Activated T-helper 1 cell treated with anti-CD3 and anti-CD28 coated beads, Interleukin-12 subunit alpha, Interleukin-12 subunit beta, Interleukin-2, Interleukin-4 antibody, amounts not matched to agents 30 ng/mL and 10 ng/mL and 1 ng/mL, durations not matched to agents 14 hours and 24 hours and 36 hours (primary cell): ENCODE measurements at regions of chr20 and their contacts with region 1.

Region 1: DNA sequence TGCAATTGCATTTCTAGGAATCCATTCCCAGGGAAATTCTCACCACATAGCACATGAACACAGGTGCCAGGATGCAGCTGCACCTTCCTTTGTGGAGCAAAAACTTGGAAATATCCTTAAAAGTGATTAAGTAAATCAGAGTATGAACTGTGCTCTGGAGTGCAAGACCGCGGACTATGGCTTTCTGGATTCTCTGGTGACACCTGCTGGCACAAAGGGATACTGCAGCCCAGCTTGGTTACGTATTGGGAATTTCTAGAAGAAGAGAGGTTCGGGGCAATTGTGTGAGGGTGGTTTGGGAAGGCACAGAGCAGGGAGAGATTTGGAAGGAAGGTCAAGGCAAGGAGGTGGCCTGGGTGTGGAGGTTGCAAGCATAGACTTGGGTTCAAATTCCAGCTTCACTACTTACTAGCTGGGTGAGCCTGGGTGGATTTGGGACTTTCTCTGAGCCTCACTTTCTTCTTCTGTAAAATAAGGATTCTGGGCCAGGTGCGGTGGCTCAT is 15.9 kb upstream of the PEDS1 start:
- DNase-seq: peak; percentile 64
- H3K4me3 Mint-ChIP-seq: no peak overlapping the region
- H3K27ac Mint-ChIP-seq: no peak overlapping the region
- H3K4me1 Mint-ChIP-seq: peaks cover 19% of the 10 kb centered on the region
- H3K27me3 Mint-ChIP-seq: peaks cover 13% of the 10 kb centered on the region

Region 2: GRCh38 chr20:50070991-50071888 is 98.1 kb before region 1 on chr20:
- intact Hi-C with region 1: loop called (anchors 1 kb)
- DNase-seq: peak; percentile 88
- H3K4me3 Mint-ChIP-seq: peak overlapping the region; percentile 56
- H3K27ac Mint-ChIP-seq: no peak overlapping the region
- H3K4me1 Mint-ChIP-seq: peaks cover 6% of the 10 kb centered on the region
- H3K27me3 Mint-ChIP-seq: peaks cover 12% of the 10 kb centered on the region

Region 3: GRCh38 chr20:50120897-50121693 is 48.3 kb before region 1 on chr20:
- intact Hi-C with region 1: loop called (anchors 1 kb)
- DNase-seq: peak; percentile 36
- H3K4me3 Mint-ChIP-seq: no peak overlapping the region
- H3K27ac Mint-ChIP-seq: no peak overlapping the region
- H3K4me1 Mint-ChIP-seq: peaks cover 3% of the 10 kb centered on the region
- H3K27me3 Mint-ChIP-seq: no peaks in the 10 kb centered on the region

Region 4: DNA sequence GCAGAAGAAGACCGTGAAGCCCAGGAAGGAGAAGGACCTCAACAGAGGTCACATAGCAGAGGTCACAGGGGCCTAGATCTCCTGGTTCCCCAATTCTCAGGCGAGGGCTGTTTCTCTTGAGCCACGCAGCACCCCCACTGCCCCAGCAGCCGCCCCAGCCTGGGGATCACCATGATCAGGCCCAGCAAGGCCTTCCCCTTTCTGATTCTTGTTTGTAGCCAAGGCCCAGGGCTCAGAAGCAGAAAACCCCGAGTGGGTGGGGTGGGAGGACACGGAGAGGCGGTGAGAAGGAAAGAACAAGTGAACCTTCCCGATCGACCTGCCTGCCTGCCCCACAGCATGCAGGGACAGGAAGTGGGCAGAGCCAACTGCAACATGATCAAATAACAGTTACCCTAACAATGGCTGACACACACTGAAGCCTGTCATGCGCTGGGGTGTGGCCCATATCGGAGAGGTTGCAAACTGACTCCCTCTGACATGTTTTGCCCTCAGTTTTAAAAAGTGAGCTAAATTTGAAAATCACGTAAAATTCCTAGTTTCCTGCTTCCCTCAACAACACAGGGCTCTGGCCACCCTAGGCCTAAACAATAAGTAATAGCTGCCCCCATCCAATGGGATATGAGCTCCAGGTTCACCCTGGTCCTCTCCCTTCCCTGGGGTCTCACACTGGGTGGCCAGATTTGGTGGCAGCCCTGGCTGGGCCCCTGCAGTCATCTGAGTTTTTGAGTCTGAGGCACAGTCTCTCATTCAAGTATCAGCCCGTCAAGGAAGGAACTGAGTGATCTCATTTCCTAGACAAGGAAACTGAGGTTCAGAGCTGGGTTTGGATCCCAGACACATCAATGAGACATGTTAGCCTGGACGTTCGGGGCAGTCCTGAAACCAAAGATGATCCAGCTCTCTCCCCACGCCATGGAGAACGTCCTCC is 22.4 kb before region 1 on chr20:
- intact Hi-C with region 1: loop called (anchors 1 kb)
- DNase-seq: peak; percentile 79
- H3K4me3 Mint-ChIP-seq: peak overlapping the region; percentile 75
- H3K27ac Mint-ChIP-seq: peak overlapping the region; percentile 95
- H3K4me1 Mint-ChIP-seq: peaks cover 74% of the 10 kb centered on the region
- H3K27me3 Mint-ChIP-seq: no peaks in the 10 kb centered on the region

Region 5: DNA sequence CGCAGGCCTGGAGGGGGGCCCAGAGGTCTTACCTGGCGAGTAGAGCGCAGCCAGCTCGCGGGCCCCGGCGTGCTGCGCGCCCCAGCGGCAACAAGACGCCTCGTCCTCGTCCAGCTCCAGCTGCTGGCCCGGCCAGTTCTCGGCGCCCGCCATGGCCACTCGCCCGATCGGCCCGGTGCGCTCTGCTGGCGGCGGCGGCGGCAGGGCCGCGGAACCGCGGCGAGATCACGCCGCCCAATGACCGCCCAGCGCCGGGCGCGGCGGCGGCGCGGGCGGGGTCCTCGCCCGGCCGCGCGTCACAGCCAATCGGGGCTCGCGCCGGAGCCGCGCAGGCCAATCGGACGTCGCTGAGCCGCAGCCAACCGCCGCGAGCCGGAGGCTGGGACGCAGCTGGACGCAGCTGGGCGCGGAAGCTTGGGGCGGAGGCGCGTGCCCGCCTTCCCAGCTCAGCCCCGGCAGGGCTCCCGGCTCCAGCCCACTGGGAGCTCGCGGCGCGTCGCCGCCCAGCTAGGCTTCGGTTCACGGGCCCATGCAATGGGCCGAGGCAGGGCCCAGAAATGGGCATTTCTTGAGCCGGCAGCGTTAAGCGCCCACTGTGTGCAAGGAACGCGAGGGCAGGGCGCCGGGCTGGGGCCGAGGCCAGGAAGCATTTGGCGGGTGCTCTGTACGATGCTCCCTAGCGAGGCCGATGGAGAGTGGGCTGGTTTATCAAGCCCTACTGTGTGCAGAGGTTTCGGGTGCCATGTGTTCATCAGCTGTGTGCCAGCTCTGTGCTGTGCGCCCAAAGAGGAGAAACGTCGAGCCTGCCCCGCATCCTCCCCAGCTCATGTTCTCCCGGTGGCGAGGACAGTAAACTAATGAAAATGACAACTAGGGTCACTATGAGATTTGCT is 15.6 kb before region 1 on chr20 and contains the start of gene PEDS1:
- intact Hi-C with region 1: loop called (anchors 1 kb)
- DNase-seq: peak; percentile 86
- H3K4me3 Mint-ChIP-seq: peak within 1 kb of the TSS; percentile 87
- H3K27ac Mint-ChIP-seq: peak within 1 kb of the TSS; percentile 79
- H3K4me1 Mint-ChIP-seq: peaks cover 48% of the 10 kb centered on the region
- H3K27me3 Mint-ChIP-seq: peaks cover 4% of the 10 kb centered on the region
- total RNA-seq, gene PEDS1: 30.7 and 33.4 TPM in 2 replicates

Region 6: DNA sequence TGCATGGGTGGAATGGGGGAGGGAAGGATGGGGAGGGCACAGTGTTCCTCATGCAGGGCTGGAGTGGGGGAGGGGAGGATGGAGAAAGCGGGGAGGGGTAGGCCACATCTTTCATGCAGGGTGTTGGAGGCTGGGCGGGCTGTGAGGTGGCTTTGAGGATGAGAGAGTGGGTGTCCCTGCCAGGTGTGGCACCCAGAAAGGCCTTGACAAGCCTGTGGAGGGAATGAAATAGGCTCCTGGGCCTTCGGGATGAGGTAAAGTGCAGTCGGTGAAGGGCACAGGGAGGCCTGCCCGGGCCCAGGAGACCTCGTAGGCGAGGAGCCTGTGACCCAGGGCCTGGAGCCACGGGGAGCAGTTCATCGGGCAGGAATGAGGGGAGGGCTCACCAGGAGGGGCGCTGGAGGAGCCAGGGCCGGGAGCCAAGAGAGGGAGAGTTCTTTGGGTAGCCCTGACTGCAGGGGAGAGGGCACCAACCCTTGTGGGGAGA is 28.8 kb after region 1 on chr20:
- intact Hi-C with region 1: no loop called
- DNase-seq: no peak
- H3K4me3 Mint-ChIP-seq: no peak overlapping the region
- H3K27ac Mint-ChIP-seq: no peak overlapping the region
- H3K4me1 Mint-ChIP-seq: peaks cover 22% of the 10 kb centered on the region
- H3K27me3 Mint-ChIP-seq: peaks cover 3% of the 10 kb centered on the region